Sigmoid colon (tissue), 7 donors: ENCODE measurements at regions of chr15 and their contacts with region 1.

Region 1: GRCh38 chr15:78481917-78482316 is 25.5 kb upstream of the HYKK start:
- DNase-seq: no peak
- H3K4me3 ChIP-seq: no peak overlapping the region
- H3K27ac ChIP-seq: no peak overlapping the region
- H3K4me1 ChIP-seq: no peaks in the 10 kb centered on the region
- H3K27me3 ChIP-seq: no peaks in the 10 kb centered on the region
- CTCF ChIP-seq: no peak
- EP300 ChIP-seq: no peak
- POLR2A ChIP-seq: no peak

Region 2: DNA sequence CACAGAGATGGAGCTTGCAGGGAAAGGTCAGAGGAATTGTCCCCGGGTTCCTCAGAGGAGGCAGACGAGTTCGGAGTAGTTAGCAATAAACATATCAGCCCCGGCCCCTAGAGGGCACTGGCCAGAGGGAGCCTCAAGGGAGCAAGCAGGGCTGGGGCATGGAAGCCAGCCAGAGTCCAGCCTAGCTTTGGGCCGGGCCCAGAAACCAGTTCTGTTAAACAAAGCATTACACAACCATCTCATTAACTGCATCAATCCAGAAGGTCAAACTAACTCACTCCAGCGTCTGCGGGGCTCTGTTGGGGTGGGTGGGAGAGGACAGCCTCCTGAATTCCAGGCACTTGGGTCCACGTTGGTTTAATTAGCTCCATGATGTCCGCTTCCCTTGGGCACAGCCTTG is 84.9 kb before region 1 on chr15:
- intact Hi-C with region 1: loop called (anchors 1 kb)
- DNase-seq: peak; percentile 87
- H3K4me3 ChIP-seq: no peak overlapping the region
- H3K27ac ChIP-seq: peak overlapping the region in 2 of 4 donors; percentile 53 to 57
- H3K4me1 ChIP-seq: peaks cover 0 to 11% (median 7%) of the 10 kb centered on the region in 4 donors
- H3K27me3 ChIP-seq: peaks cover 0 to 5% (median 0%) of the 10 kb centered on the region in 3 donors
- CTCF ChIP-seq: peak in 3 of 4 experiments; percentile 19 to 40 (median 24)
- EP300 ChIP-seq: no peak
- POLR2A ChIP-seq: no peak

Region 3: DNA sequence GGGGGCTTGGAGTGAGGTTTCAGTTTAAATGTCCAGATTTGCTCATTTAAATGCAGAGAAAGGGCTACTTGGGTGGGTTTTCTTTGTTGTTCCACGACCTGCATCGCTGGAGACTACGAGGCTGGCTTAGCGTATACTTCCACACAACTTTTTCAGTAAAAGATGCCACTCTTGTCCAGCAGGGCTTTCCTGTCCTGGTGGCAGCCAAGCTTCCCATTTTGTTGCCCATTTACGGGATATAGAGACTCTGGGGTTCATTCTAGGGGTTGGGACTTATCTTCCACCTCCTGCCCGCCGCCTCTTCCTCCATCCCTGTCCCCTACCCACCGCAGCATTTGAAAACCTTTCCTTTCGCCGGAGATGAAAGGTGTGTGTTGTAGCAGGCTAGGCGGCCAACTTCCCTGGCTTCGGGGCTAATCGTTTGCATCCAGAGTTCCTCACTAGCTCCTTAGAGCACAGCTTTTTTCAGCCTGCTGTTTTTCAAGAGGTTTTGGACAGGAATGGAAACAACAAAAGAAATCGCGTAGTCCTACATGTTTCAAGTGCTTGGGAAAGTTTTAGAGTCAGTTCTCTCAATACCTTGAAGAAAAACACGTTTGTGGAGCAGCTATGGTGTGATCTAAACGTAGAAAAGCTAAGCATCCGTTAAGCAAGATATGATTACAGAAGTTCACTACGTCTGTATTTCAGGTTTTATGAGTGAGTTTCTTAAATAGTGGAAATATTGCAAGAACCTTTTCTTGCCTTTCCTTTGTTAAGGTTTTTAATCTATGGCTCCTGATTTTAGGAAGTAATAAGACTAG is 84.2 kb after region 1 on chr15:
- intact Hi-C with region 1: no loop called
- DNase-seq: no peak
- H3K4me3 ChIP-seq: peak overlapping the region; percentile 42 to 61 (median 54)
- H3K27ac ChIP-seq: peak overlapping the region; percentile 62 to 82 (median 80)
- H3K4me1 ChIP-seq: peaks cover 0 to 18% (median 10%) of the 10 kb centered on the region in 4 donors
- H3K27me3 ChIP-seq: no peaks in the 10 kb centered on the region
- CTCF ChIP-seq: peak in 1 of 4 experiments; percentile 33
- EP300 ChIP-seq: no peak
- POLR2A ChIP-seq: no peak